CD8-positive, alpha-beta T cell (primary cell): ENCODE measurements at regions of chr7 and their contacts with region 1.

Region 1: GRCh38 chr7:992709-993607 is 10.0 kb downstream of the CYP2W1 start:
- DNase-seq: peak; percentile 88 to 96 (median 95)
- ATAC-seq: peak; percentile 99
- H3K4me3 ChIP-seq: no peak overlapping the region
- H3K4me3 Mint-ChIP-seq: no peak overlapping the region
- H3K27ac ChIP-seq: no peak overlapping the region
- H3K27ac Mint-ChIP-seq: no peak overlapping the region
- H3K4me1 ChIP-seq: peaks cover 4% of the 10 kb centered on the region
- H3K4me1 Mint-ChIP-seq: peaks cover 4% of the 10 kb centered on the region
- H3K27me3 ChIP-seq: no peaks in the 10 kb centered on the region
- H3K27me3 Mint-ChIP-seq: no peaks in the 10 kb centered on the region
- CTCF ChIP-seq: peak; percentile 97

Region 2: GRCh38 chr7:974820-975681 is 17.9 kb before region 1 on chr7 and contains the start of gene COX19:
- CTCF ChIA-PET with region 1: interaction called, 26 read pairs
- POLR2A ChIA-PET with region 1: interaction called, 5 read pairs
- intact Hi-C with region 1: loop called in 1 of 2 experiments (anchors 1 kb)
- DNase-seq: peak; percentile 83 to 95 (median 90)
- ATAC-seq: peak; percentile 87
- H3K4me3 ChIP-seq: peak within 1 kb of the TSS; percentile 95 to 100
- H3K4me3 Mint-ChIP-seq: peak within 1 kb of the TSS; percentile 89
- H3K27ac ChIP-seq: peak within 1 kb of the TSS; percentile 98 to 99
- H3K27ac Mint-ChIP-seq: peak within 1 kb of the TSS; percentile 95
- H3K4me1 ChIP-seq: peaks cover 28% of the 10 kb centered on the region
- H3K4me1 Mint-ChIP-seq: peaks cover 31% of the 10 kb centered on the region
- H3K27me3 ChIP-seq: no peaks in the 10 kb centered on the region
- H3K27me3 Mint-ChIP-seq: no peaks in the 10 kb centered on the region
- CTCF ChIP-seq: no peak
- total RNA-seq, gene COX19: 40.3 to 42.4 TPM

Region 3: DNA sequence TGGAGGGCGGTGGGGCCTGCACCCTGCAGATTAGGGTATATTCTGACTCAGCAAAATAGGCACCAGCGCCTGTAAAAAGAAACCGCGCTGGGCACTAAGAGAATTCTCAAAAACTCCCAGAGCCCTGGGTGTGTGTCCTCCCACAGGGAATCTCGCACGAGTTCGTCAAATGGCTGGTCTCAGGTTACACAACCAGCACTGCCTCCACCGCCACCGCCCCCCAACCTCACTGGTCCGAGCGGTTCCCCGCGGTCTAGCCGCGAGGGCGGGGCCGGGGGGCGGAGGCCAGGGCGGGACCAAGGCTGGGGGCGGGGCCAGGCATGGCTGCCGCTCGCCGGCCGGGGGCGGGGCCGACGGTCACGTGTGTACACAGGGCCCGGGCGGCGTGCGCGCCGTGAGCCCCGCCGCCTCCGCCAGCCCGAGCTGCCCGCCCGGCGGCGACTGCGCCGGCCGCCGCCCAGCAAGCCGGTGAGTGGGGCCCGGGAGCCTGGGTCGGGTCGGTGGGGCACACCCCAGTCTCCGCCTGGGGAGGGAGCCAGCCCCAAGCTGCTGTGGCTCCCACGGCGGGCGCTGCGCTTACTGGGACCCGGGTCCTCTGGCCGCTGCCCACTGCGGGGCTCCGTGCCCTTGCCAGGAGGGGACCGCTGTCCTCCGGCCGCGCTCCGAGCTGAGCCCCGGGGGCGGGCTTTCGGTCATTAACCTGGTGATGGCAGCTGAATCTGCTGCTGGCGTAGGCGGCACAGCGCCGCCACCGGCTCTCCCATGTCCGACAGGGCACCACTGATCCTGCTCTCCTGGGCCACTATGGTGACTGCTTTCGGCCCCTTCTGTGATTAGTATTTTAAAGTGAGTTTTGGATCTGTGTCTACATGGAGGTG is 51.5 kb after region 1 on chr7 and contains the start of gene GPR146:
- CTCF ChIA-PET with region 1: interaction called, 41 read pairs
- POLR2A ChIA-PET with region 1: no interaction called
- intact Hi-C with region 1: loop called (anchors 1 kb)
- DNase-seq: peak; percentile 76 to 97 (median 91)
- ATAC-seq: peak; percentile 88
- H3K4me3 ChIP-seq: peak within 1 kb of the TSS; percentile 57 to 71
- H3K4me3 Mint-ChIP-seq: peak within 1 kb of the TSS; percentile 84
- H3K27ac ChIP-seq: peak within 1 kb of the TSS; percentile 51 to 57
- H3K27ac Mint-ChIP-seq: peak within 1 kb of the TSS; percentile 52
- H3K4me1 ChIP-seq: peaks cover 53% of the 10 kb centered on the region
- H3K4me1 Mint-ChIP-seq: peaks cover 63% of the 10 kb centered on the region
- H3K27me3 ChIP-seq: no peaks in the 10 kb centered on the region
- H3K27me3 Mint-ChIP-seq: no peaks in the 10 kb centered on the region
- CTCF ChIP-seq: peak; percentile 60
- total RNA-seq, gene GPR146: 4.4 to 5.0 TPM

Region 4: DNA sequence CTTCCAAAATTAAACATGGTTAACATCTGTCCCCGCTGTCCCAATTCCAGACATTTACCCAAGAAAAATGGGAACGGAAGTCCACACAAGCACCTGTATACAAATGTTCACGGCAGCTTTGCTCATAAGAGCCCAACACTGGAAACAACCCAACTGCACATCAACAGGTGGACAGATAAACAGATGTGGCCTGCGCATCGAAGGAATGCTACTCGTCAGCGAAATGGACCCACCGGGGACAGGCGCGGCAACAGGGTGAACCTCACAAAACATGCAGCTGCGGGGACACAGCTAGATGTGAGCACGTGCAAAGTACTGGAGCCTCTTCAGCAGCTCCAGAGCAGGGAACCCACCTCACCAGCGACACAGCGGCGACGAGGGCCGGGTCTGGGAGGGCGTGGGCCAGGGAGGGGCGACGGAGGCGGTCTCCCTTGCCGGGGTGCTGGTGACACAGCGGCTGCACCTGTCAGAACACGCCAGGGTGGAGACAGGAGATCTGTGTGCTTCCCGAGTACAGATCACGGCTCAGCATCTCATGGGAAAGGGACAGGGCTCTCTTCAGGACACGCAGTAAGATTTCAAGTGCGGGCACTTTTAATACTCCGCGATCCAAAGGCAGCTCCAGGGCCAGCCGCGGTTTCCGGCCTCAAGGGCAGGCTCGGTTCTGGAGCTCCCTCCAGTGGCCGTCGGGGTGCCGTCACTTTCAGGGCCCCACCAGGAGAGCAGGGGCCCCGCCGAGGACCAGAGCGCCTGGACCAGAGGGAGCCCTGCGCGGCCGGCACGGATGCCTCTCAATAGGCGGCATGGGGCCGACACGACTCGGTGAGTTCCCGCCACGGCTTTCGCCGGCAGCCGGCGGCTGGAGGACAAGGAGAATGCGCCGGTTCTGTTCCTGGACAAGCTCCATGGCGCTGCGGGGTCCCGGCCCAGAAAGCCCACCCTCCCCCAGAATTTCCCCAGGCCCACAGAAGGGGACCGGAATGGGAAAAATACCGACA is 72.6 kb after region 1 on chr7:
- CTCF ChIA-PET with region 1: interaction called, 366 read pairs
- POLR2A ChIA-PET with region 1: interaction called, 22 read pairs
- intact Hi-C with region 1: loop called (anchors 1 kb)
- DNase-seq: peak; percentile 69 to 91 (median 83)
- ATAC-seq: peak; percentile 97
- H3K4me3 ChIP-seq: peak overlapping the region; percentile 37 to 42
- H3K4me3 Mint-ChIP-seq: peak overlapping the region; percentile 72
- H3K27ac ChIP-seq: no peak overlapping the region
- H3K27ac Mint-ChIP-seq: no peak overlapping the region
- H3K4me1 ChIP-seq: peaks cover 5% of the 10 kb centered on the region
- H3K4me1 Mint-ChIP-seq: peaks cover 9% of the 10 kb centered on the region
- H3K27me3 ChIP-seq: peaks cover 0 to 4% of the 10 kb centered on the region in 2 experiments
- H3K27me3 Mint-ChIP-seq: no peaks in the 10 kb centered on the region
- CTCF ChIP-seq: peak; percentile 86

Region 5: GRCh38 chr7:1137510-1138167 is 144.7 kb after region 1 on chr7:
- CTCF ChIA-PET with region 1: interaction called, 11 read pairs
- POLR2A ChIA-PET with region 1: no interaction called
- intact Hi-C with region 1: no loop called
- DNase-seq: no peak
- ATAC-seq: peak; percentile 62
- H3K4me3 ChIP-seq: peak overlapping the region; percentile 77 to 78
- H3K4me3 Mint-ChIP-seq: peak overlapping the region; percentile 90
- H3K27ac ChIP-seq: peak overlapping the region; percentile 81 to 91
- H3K27ac Mint-ChIP-seq: peak overlapping the region; percentile 88
- H3K4me1 ChIP-seq: peaks cover 14% of the 10 kb centered on the region
- H3K4me1 Mint-ChIP-seq: peaks cover 17% of the 10 kb centered on the region
- H3K27me3 ChIP-seq: no peaks in the 10 kb centered on the region
- H3K27me3 Mint-ChIP-seq: no peaks in the 10 kb centered on the region
- CTCF ChIP-seq: no peak

Region 6: DNA sequence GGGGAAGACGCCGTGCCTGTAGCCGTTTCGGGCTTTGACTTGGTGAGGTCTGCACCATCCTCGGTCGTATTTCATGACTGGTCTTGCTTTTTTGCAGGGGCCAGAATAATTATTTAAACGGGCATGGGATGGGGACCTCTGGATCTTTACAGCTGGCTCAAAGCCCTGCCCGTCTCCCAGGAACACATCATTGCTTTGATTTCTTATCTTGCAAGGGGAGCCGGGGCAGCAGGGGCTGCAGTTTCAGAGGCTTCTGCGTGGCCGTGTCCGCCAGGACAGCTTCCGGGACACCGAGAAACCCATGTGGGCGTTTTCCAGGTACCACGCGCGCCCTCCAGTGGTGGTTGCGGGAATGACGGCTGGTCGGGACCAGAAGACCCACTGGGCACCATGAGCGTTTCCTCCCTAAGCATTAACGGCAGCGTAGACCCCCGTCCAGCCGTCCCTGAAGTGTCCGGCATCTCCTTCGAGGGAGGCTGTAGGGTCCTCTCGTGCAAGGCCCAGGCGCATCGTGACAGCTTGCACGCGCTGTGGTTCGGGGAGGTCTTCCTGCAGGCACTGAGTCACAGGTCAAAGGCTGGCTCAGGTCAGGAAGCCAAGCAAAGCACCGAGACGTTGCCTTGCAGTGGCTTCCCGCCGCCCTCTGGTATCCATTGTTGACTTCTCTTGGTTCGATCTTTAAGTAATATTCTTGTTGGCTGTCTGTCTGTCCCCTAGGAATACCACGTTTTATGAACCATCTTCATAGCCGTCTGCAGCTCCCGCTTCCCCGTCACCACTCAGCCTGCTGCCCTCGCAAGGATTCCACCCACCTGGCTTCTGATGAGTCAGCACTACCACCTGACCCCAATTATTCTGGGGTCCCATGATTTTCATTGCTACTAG is 183.3 kb after region 1 on chr7:
- CTCF ChIA-PET with region 1: interaction called, 14 read pairs
- POLR2A ChIA-PET with region 1: no interaction called
- intact Hi-C with region 1: loop called in 1 of 2 experiments (anchors 1 kb)
- DNase-seq: peak; percentile 54 to 88 (median 78)
- ATAC-seq: peak; percentile 70
- H3K4me3 ChIP-seq: peak overlapping the region; percentile 2 to 10
- H3K4me3 Mint-ChIP-seq: peak overlapping the region; percentile 70
- H3K27ac ChIP-seq: no peak overlapping the region
- H3K27ac Mint-ChIP-seq: no peak overlapping the region
- H3K4me1 ChIP-seq: peaks cover 10% of the 10 kb centered on the region
- H3K4me1 Mint-ChIP-seq: peaks cover 9% of the 10 kb centered on the region
- H3K27me3 ChIP-seq: no peaks in the 10 kb centered on the region
- H3K27me3 Mint-ChIP-seq: peaks cover 8% of the 10 kb centered on the region
- CTCF ChIP-seq: peak; percentile 94

Region 7: GRCh38 chr7:2157468-2158279 is 1164.7 kb after region 1 on chr7:
- CTCF ChIA-PET with region 1: no interaction called
- POLR2A ChIA-PET with region 1: no interaction called
- intact Hi-C with region 1: no loop called
- DNase-seq: no peak
- ATAC-seq: no peak
- H3K4me3 ChIP-seq: no peak overlapping the region
- H3K4me3 Mint-ChIP-seq: no peak overlapping the region
- H3K27ac ChIP-seq: no peak overlapping the region
- H3K27ac Mint-ChIP-seq: no peak overlapping the region
- H3K4me1 ChIP-seq: no peaks in the 10 kb centered on the region
- H3K4me1 Mint-ChIP-seq: no peaks in the 10 kb centered on the region
- H3K27me3 ChIP-seq: no peaks in the 10 kb centered on the region
- H3K27me3 Mint-ChIP-seq: no peaks in the 10 kb centered on the region
- CTCF ChIP-seq: no peak